AG04450 (cell line): ENCODE measurements at regions of chr1 and their contacts with region 1.

Region 1: DNA sequence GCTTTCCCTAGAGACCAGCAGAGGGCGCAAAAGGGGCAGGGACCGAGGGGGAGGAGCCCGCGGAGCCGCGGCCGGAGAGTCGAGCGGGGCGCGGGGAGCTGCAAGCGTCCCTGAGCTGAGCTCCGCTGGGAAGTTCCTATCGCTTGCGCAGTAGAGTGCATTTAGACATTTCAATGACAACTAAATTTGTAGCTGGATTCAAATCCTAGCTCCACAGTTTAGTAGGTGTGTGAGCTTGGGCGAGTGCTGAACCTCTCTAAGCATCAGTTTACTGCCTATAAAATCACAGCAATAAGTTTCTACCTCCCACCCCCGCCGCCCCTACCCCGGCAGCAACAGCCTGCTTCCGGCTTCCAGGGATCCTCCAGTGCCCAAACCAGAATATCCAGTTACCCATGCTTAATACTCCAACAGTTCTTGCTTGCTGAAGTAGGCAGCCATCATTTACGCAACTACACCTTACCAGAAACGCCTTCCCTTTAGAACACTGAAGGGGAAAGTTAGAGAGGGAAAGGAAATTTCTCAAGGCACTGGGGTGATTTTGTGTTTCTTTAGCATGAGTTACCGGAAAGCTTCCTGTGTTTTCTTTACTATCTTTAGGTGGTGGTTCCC is 9.1 kb downstream of the TLR5 start:
- DNase-seq: peak; percentile 57
- H3K4me3 ChIP-seq: peak overlapping the region; percentile 46
- H3K27ac ChIP-seq: no peak overlapping the region
- H3K27me3 ChIP-seq: peaks cover 25% of the 10 kb centered on the region
- CTCF ChIP-seq: peak; percentile 98

Region 2: GRCh38 chr1:223114871-223115270 is 19.1 kb before region 1 on chr1:
- CTCF ChIA-PET with region 1: interaction called, 144 read pairs
- POLR2A ChIA-PET with region 1: no interaction called
- DNase-seq: no peak
- H3K4me3 ChIP-seq: no peak overlapping the region
- H3K27ac ChIP-seq: no peak overlapping the region
- H3K27me3 ChIP-seq: peaks cover 21% of the 10 kb centered on the region
- CTCF ChIP-seq: no peak

Region 3: GRCh38 chr1:223153177-223154119 is 19.5 kb after region 1 on chr1:
- CTCF ChIA-PET with region 1: interaction called, 15 read pairs
- POLR2A ChIA-PET with region 1: no interaction called
- DNase-seq: no peak
- H3K4me3 ChIP-seq: no peak overlapping the region
- H3K27ac ChIP-seq: no peak overlapping the region
- H3K27me3 ChIP-seq: peaks cover 6% of the 10 kb centered on the region
- CTCF ChIP-seq: no peak

Region 4: DNA sequence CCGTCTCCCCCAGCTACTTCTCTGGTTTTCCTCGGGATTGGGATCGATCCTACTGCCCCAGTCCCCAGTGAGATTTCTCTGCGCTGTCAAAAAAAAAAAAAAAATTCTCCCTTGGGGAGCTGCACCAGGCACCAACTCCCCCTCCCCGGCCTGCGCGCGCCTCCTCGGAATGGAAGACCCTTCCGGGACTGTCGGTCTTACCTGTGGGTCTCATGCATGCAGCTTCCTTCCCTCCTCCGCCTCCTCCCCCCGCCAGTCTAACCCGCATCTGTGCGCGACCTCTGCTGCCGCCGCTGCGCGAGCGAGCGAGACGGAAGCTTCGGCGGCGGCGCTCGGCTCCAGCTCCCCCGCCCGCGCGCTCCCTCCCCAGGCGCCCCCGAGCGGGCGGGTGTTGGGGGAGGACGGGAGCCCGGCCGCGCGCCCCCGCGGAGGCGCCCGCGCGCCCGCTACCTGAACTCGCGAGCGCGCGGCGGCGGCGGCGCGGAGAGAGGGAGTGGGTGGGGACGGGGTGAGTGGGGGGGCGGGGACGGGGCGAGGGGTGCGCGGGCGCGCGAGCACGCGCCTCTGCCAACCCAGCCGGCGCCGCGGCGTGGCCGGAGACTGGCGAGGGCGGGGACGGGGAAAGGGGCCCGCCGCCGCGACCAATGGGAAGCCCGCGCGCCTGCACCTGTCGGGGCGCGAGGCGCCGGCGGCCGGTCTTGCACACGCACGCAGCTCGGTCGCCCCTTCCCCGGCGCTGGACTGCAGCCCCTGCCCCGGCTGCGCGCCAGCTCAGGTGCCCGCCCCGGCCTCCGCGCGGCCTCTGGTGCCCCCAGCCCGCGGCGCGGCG is 230.1 kb after region 1 on chr1 and contains the start of gene SUSD4:
- CTCF ChIA-PET with region 1: interaction called, 17 read pairs
- POLR2A ChIA-PET with region 1: no interaction called
- DNase-seq: no peak
- H3K4me3 ChIP-seq: peak within 1 kb of the TSS; percentile 40
- H3K27ac ChIP-seq: no peak within 1 kb of the TSS
- H3K27me3 ChIP-seq: peaks cover 58% of the 10 kb centered on the region
- CTCF ChIP-seq: no peak
- polyA plus RNA-seq, gene SUSD4: 0.12 and 0.29 TPM in 2 replicates

Region 5: DNA sequence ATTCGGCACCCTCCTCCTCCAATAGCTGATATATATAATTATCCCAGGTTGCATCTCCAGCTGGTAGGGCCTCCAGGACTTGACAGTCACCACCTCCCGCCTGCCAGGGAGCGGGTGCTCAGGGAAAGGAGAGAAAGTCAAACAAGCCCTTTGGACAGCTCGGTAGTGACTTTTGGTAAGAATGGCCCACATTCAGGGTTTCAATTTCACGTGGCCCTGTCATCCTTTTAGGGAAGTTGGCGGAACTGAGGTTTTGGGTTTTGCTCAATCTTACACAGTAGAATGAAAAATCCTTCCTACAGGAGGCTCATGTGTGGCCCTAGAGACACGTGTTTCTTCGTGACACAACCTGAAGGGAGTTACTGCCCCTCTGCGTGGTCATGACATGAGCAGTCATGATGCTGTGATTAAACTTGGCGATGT is 487.4 kb after region 1 on chr1:
- CTCF ChIA-PET with region 1: interaction called, 21 read pairs
- POLR2A ChIA-PET with region 1: no interaction called
- DNase-seq: no peak
- H3K4me3 ChIP-seq: no peak overlapping the region
- H3K27ac ChIP-seq: no peak overlapping the region
- H3K27me3 ChIP-seq: peaks cover 11% of the 10 kb centered on the region
- CTCF ChIP-seq: no peak

Region 6: GRCh38 chr1:223670458-223671168 is 536.7 kb after region 1 on chr1:
- CTCF ChIA-PET with region 1: interaction called, 12 read pairs
- POLR2A ChIA-PET with region 1: no interaction called
- DNase-seq: no peak
- H3K4me3 ChIP-seq: no peak overlapping the region
- H3K27ac ChIP-seq: no peak overlapping the region
- H3K27me3 ChIP-seq: peaks cover 2% of the 10 kb centered on the region
- CTCF ChIP-seq: peak; percentile 46

Region 7: GRCh38 chr1:224406216-224406615 is 1272.3 kb after region 1 on chr1:
- CTCF ChIA-PET with region 1: no interaction called
- POLR2A ChIA-PET with region 1: no interaction called
- DNase-seq: no peak
- H3K4me3 ChIP-seq: no peak overlapping the region
- H3K27ac ChIP-seq: no peak overlapping the region
- H3K27me3 ChIP-seq: no peaks in the 10 kb centered on the region
- CTCF ChIP-seq: no peak